ENCODE measurements at regions of chr1 and their contacts with region 1.

Region 1: DNA sequence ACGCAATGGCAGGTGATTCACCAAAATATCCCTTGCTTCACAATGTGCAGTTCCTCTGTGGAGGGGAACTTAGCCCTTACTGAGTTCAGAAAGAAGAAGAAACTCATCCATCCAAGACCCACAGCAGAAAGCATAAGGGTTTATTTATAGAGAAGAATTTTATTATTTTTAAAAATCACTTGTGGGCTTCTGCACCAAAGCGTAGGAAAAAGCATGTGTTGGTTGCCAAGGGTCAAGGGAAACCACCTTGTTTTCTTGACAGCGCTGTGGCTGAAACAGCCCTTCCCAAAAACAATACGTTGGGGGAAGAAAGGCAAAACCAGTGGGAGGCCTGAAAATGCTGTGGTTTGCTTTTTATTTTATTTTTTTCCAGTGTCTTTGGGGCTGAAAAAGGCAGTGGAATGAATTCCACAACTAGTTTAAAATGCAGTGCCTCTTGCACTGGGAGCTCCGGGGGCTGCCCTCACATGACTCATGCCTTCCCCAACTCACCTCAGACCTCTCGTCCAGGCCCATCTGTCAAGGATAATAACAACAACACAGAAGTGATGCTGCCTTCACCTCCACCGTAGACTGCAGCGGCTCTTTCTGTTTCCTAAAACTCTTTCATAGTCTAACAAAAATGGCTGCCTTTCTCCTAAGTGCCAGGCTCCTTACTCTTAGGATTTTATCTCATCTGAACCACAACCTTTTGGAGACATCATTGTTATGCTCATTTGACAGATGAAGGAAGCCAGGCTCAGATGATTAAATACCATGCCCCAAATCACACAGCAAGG is 224.2 kb upstream of the JUN start:
- DNase-seq: peak; percentile 7
- H3K4me3 Mint-ChIP-seq: peak overlapping the region; percentile 52
- H3K27ac Mint-ChIP-seq: peak overlapping the region; percentile 94
- H3K4me1 Mint-ChIP-seq: peaks cover 90% of the 10 kb centered on the region
- H3K27me3 Mint-ChIP-seq: no peaks in the 10 kb centered on the region

Region 2: DNA sequence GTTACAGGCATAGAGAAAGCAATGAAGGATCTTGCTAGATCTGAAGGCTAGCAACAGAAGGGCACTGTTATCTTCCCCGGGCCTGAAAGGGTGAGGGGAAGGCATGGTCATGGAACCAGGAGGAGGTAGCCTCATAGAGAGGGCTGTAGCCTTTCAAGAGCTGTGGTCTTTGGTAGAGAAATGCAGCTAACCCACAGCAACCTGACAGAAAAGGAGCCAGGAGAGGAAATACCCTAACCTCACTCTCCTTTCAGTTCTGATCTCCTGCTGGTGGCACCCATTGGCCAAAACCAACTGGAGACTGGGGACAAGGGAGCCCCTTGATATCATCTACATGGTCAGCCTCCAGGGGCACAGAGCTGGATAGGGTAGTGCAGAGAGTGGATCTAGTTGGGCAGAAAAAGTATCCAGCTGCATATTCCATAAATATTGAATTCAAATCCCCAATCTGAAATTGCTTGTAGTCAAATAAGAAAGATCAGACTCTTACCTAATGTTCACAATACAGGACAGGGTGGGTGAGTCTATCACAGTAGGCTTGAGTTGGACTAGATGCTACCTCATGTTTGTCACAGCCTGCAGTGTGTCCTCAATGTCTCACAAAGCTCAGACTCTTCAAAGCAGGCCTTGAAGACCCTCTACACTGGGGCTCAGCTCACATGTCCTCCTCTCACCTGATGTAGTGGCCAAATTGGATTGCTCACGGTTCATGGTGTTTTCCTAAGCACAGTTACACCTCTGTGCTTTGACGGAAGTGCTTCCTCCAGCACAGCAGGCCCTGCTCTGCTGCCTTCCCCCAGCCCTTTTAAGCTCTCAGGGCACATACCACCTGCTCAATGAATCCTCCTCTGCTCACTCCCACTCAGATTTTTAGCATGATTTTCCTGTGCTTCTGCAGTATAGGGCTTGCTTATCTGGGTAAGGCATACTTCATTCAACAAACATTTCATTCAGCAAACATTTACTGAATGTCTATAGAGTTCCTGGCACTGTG is 150.0 kb before region 1 on chr1:
- intact Hi-C with region 1: loop called (anchors 2 kb)
- DNase-seq: peak; percentile 43
- H3K4me3 Mint-ChIP-seq: peak overlapping the region; percentile 61
- H3K27ac Mint-ChIP-seq: peak overlapping the region; percentile 95
- H3K4me1 Mint-ChIP-seq: peaks cover 74% of the 10 kb centered on the region
- H3K27me3 Mint-ChIP-seq: no peaks in the 10 kb centered on the region

Region 3: DNA sequence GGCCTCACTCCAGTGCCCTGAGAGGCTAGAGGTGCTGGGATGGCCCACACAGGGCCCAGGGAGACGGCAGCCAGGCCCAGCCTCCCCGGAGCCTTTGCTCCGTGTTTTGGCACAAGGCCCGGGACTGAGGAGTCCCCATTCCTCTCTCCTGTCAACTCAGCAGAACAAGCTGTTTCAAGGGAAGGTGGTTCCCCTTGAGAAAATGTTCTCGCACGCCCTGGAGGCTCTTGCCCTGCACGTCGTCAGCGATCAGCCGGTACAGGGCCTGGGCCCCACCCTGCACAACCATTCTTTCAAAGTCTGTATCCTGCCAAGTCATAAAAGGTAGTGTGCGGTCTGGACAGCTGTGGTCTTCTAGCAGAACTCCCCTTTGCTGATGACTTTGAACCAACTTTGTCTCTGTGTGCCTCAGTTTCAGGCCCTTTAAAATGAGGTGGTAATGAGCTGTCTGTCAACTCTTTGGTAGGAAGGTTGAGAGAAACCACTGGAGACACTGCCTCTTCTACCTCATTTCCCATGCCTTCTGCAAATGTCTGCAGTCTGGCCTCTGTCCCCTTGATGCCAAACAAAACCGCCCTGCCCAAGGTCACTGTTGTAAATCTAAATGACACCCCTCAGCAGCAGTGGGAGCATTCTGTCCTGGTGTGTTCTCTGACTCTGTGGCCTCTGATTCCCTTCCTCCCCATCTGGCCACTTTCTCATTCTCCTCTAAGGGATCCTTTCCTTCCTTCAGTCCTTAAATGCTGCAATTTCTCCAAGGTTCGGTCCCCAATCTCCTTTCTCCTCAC is 85.5 kb before region 1 on chr1:
- intact Hi-C with region 1: loop called (anchors 5 kb)
- DNase-seq: peak; percentile 65
- H3K4me3 Mint-ChIP-seq: peak overlapping the region; percentile 44
- H3K27ac Mint-ChIP-seq: peak overlapping the region; percentile 64
- H3K4me1 Mint-ChIP-seq: peaks cover 31% of the 10 kb centered on the region
- H3K27me3 Mint-ChIP-seq: peaks cover 2% of the 10 kb centered on the region

Region 4: DNA sequence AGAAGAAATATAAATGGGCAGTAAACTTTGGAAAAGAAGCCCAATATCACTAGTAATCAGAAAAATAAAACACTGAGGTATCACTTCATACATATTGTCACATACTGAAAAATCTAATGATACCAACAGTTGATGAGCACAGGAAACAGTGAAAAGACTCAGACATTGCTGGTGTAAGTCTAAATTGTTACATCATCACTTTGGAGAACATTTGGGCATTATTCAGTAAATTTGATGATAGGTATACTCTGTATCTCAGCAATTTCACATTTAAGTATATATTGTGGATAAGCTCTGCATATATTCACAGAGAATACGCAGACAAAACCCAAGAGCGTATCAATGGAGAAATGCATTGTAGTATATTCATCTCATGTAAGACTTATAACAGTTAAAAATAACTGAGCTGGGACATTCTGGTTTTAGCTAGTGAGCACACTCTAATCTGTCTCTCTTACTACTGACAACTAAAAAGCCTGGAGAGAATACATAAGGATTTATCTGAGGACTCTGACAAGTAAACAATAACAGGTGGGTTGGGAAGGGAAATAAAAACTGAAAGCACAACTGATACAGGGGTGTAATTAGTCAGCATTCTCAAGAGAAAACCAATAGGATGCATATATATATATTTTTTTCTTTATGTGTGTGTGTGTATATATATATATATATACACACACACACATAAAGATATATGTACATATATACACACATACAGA is 11.5 kb before region 1 on chr1:
- intact Hi-C with region 1: loop called (anchors 1 kb)
- DNase-seq: no peak
- H3K4me3 Mint-ChIP-seq: peak overlapping the region; percentile 38
- H3K27ac Mint-ChIP-seq: peak overlapping the region; percentile 68
- H3K4me1 Mint-ChIP-seq: peaks cover 62% of the 10 kb centered on the region
- H3K27me3 Mint-ChIP-seq: no peaks in the 10 kb centered on the region

Region 5: GRCh38 chr1:59046730-59047157 is 38.7 kb after region 1 on chr1:
- intact Hi-C with region 1: loop called (anchors 1 kb)
- DNase-seq: peak; percentile 62
- H3K4me3 Mint-ChIP-seq: peak overlapping the region; percentile 67
- H3K27ac Mint-ChIP-seq: peak overlapping the region; percentile 71
- H3K4me1 Mint-ChIP-seq: peaks cover 77% of the 10 kb centered on the region
- H3K27me3 Mint-ChIP-seq: no peaks in the 10 kb centered on the region

Region 6: GRCh38 chr1:59332983-59333382 is 325.0 kb after region 1 on chr1:
- intact Hi-C with region 1: loop called (anchors 1 kb)
- DNase-seq: peak; percentile 47
- H3K4me3 Mint-ChIP-seq: peak overlapping the region; percentile 15
- H3K27ac Mint-ChIP-seq: peak overlapping the region; percentile 78
- H3K4me1 Mint-ChIP-seq: peaks cover 44% of the 10 kb centered on the region
- H3K27me3 Mint-ChIP-seq: no peaks in the 10 kb centered on the region

Region 7: GRCh38 chr1:59699227-59699847 is 691.3 kb after region 1 on chr1:
- intact Hi-C with region 1: loop called (anchors 2 kb)
- DNase-seq: no peak
- H3K4me3 Mint-ChIP-seq: no peak overlapping the region
- H3K27ac Mint-ChIP-seq: no peak overlapping the region
- H3K4me1 Mint-ChIP-seq: peaks cover 33% of the 10 kb centered on the region
- H3K27me3 Mint-ChIP-seq: no peaks in the 10 kb centered on the region

Measured in activated T-helper 1 cell treated with anti-CD3 and anti-CD28 coated beads, Interleukin-12 subunit alpha, Interleukin-12 subunit beta, Interleukin-2, Interleukin-4 antibody, amounts not matched to agents 30 ng/mL and 10 ng/mL and 1 ng/mL, durations not matched to agents 14 hours and 24 hours and 36 hours (primary cell).